WTC11 (cell line): ENCODE measurements at regions of chr12 and their contacts with region 1.

Region 1: DNA sequence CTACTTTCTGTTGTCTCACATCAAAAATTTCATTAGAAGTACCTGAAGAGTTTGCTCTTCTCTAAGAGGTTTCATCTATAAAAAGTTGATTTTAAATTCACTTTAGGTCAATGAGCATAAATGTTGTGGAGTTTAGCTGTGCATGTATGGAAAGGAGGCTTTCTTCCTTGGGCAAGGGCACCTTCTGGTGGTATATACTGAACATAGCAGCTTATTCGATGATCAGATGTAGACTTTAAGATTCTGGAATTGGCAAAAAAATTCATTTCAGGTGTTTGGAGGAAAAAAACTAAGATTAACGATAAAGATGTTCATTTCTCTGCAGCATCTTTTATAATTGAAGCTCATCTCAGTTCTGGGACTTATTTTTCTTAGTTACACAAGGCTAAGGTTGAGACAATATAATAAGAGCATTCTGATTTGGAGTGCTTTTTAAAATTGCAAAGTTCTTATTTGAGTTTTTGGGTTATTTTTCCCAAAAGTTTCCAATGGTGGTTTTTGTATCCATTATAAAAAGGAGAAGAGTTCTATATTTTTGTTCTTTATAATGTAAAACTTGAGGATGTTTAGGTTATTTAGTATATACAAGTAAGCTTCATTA is 46.8 kb downstream of the TMEM117 start:
- DNase-seq: no peak
- ATAC-seq: peak; percentile 77
- H3K4me3 Mint-ChIP-seq: no peak overlapping the region
- H3K27ac Mint-ChIP-seq: no peak overlapping the region
- H3K4me1 Mint-ChIP-seq: no peaks in the 10 kb centered on the region
- H3K27me3 Mint-ChIP-seq: no peaks in the 10 kb centered on the region
- CTCF ChIP-seq: peak; percentile 55; the same call in 1 of the 2 replicates

Region 2: DNA sequence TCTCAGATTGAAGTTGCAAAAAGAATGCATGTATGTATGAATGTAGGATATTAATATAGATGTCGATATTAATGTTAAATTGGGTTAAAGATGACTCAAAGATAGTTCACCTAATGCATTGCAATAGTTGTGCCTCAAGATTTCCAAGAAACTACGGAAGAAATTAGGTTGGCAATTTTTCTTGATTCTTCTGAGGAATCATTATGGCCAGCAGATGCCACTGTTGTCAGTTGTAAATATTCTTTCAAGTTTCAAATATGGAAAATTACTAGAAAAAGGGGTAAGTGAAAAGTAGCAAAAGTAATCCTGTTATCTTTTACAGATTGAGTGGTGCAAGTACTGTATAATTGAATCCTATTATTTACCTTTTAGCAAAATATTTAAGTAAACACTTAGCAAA is 532.8 kb before region 1 on chr12:
- CTCF ChIA-PET with region 1: no interaction called
- POLR2A ChIA-PET with region 1: no interaction called
- DNase-seq: no peak
- ATAC-seq: no peak
- H3K4me3 Mint-ChIP-seq: no peak overlapping the region
- H3K27ac Mint-ChIP-seq: no peak overlapping the region
- H3K4me1 Mint-ChIP-seq: no peaks in the 10 kb centered on the region
- H3K27me3 Mint-ChIP-seq: peaks cover 4% of the 10 kb centered on the region; the same call in 1 of the 2 replicates
- CTCF ChIP-seq: no peak

Region 3: GRCh38 chr12:43444940-43445564 is 437.6 kb before region 1 on chr12:
- CTCF ChIA-PET with region 1: interaction called, 13 read pairs
- POLR2A ChIA-PET with region 1: no interaction called
- DNase-seq: peak; percentile 71
- ATAC-seq: 0 out of 2 replicates have a peak, but pooled peaks have one; percentile 28
- H3K4me3 Mint-ChIP-seq: no peak overlapping the region
- H3K27ac Mint-ChIP-seq: no peak overlapping the region
- H3K4me1 Mint-ChIP-seq: peaks cover 7% of the 10 kb centered on the region
- H3K27me3 Mint-ChIP-seq: no peaks in the 10 kb centered on the region
- CTCF ChIP-seq: peak; percentile 69

Region 4: GRCh38 chr12:43758728-43759563 is 123.7 kb before region 1 on chr12 and contains the starts of genes IRAK4 and PUS7L:
- CTCF ChIA-PET with region 1: interaction called, 13 read pairs
- POLR2A ChIA-PET with region 1: no interaction called
- DNase-seq: peak; percentile 92
- ATAC-seq: peak; percentile 92
- H3K4me3 Mint-ChIP-seq: peak within 1 kb of the TSS; percentile 87
- H3K27ac Mint-ChIP-seq: peak within 1 kb of the TSS; percentile 95
- H3K4me1 Mint-ChIP-seq: peaks cover 42% of the 10 kb centered on the region
- H3K27me3 Mint-ChIP-seq: no peaks in the 10 kb centered on the region
- CTCF ChIP-seq: no peak
- total RNA-seq, gene IRAK4: 5.7 to 6.5 TPM (median 6.1 TPM) in 3 replicates
- total RNA-seq, gene PUS7L: 16.0 to 20.7 TPM (median 16.4 TPM) in 3 replicates

Region 5: DNA sequence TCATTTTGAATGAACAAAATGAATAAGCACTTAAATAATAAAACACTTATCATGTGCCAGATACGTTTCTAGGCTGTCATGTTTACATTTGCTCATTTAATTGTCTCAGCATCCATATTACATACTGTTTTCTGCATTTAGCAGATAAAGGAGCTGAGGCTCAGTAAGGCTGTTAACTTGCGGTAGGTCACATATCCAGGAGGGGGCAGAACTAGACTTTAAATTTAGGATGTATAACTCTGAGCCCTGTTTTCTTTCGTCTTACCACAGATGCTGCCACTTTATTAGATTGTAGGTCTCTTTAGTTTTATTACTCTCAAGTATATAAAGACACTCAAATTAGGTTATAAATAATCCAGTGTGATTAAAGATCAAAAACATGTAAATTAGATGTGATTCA is 106.2 kb before region 1 on chr12:
- CTCF ChIA-PET with region 1: interaction called, 64 read pairs
- POLR2A ChIA-PET with region 1: no interaction called
- DNase-seq: no peak
- ATAC-seq: peak; percentile 84
- H3K4me3 Mint-ChIP-seq: no peak overlapping the region
- H3K27ac Mint-ChIP-seq: no peak overlapping the region
- H3K4me1 Mint-ChIP-seq: no peaks in the 10 kb centered on the region
- H3K27me3 Mint-ChIP-seq: no peaks in the 10 kb centered on the region
- CTCF ChIP-seq: peak; percentile 28; the same call in 1 of the 2 replicates

Region 6: DNA sequence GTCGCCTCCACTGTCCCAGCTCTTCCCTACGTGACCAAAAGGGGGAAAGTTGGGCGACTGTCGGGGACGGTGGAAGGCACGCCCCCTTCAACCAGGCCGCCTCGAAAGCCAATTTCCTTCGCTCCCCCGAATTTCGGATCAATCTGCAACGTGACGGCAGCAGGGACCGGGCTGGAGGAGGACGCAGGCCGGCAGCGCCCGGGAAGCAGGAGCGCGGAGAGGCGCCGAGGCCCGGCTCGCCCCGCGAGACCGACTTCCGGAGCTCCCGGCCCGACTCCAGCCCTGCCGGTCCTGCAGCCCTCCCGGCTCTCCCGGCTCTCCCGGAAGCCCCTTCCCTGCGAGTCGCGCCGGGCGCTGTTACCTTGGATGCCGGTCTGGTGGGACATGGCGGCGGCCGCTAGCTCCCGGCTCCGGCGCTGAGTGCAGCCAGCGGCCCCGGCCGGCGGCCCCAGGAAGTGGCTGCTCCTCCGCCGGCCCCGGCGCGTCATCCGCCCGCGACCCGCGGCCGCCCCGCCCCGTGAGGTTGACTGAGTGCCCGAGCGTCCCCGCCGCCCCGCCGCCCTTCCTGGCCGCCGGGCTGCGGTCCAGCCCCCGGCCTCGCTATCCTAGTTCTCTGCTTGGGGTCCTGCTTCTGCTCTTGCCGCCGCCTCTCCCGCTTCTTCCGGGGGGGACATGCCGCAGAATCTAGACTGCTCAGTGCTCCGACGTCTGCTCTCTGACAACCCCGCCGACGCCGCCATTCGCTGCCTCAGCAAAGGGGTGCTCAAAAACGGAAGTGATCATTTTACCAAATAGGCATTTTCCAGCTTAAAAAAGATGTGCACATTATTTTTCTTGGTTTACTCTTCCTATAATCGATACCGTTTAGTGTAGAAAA is 76.6 kb before region 1 on chr12 and contains the start of gene TWF1:
- CTCF ChIA-PET with region 1: interaction called, 28 read pairs
- POLR2A ChIA-PET with region 1: no interaction called
- DNase-seq: peak; percentile 89
- ATAC-seq: peak; percentile 91
- H3K4me3 Mint-ChIP-seq: peak within 1 kb of the TSS; percentile 99
- H3K27ac Mint-ChIP-seq: peak within 1 kb of the TSS; percentile 100
- H3K4me1 Mint-ChIP-seq: peaks cover 12% of the 10 kb centered on the region
- H3K27me3 Mint-ChIP-seq: no peaks in the 10 kb centered on the region; the same call in 1 of the 2 replicates
- CTCF ChIP-seq: no peak
- total RNA-seq, gene TWF1: 28.4 to 33.1 TPM (median 29.0 TPM) in 3 replicates

Region 7: GRCh38 chr12:43824207-43824775 is 58.4 kb before region 1 on chr12:
- CTCF ChIA-PET with region 1: interaction called, 10 read pairs
- POLR2A ChIA-PET with region 1: no interaction called
- DNase-seq: no peak
- ATAC-seq: peak; percentile 78
- H3K4me3 Mint-ChIP-seq: no peak overlapping the region
- H3K27ac Mint-ChIP-seq: peak overlapping the region; percentile 57
- H3K4me1 Mint-ChIP-seq: peaks cover 7% of the 10 kb centered on the region
- H3K27me3 Mint-ChIP-seq: no peaks in the 10 kb centered on the region; the same call in none of the 2 replicates
- CTCF ChIP-seq: no peak

Region 8: GRCh38 chr12:43893670-43894069 is 11.0 kb after region 1 on chr12:
- CTCF ChIA-PET with region 1: no interaction called
- POLR2A ChIA-PET with region 1: no interaction called
- DNase-seq: no peak
- ATAC-seq: no peak
- H3K4me3 Mint-ChIP-seq: no peak overlapping the region
- H3K27ac Mint-ChIP-seq: no peak overlapping the region
- H3K4me1 Mint-ChIP-seq: peaks cover 3% of the 10 kb centered on the region
- H3K27me3 Mint-ChIP-seq: no peaks in the 10 kb centered on the region
- CTCF ChIP-seq: no peak